ENCODE measurements at regions of chr1 and their contacts with region 1.

Region 1: GRCh38 chr1:108828022-108828961 is 28.6 kb downstream of the AKNAD1 start:
- DNase-seq: peak; percentile 90

Region 2: DNA sequence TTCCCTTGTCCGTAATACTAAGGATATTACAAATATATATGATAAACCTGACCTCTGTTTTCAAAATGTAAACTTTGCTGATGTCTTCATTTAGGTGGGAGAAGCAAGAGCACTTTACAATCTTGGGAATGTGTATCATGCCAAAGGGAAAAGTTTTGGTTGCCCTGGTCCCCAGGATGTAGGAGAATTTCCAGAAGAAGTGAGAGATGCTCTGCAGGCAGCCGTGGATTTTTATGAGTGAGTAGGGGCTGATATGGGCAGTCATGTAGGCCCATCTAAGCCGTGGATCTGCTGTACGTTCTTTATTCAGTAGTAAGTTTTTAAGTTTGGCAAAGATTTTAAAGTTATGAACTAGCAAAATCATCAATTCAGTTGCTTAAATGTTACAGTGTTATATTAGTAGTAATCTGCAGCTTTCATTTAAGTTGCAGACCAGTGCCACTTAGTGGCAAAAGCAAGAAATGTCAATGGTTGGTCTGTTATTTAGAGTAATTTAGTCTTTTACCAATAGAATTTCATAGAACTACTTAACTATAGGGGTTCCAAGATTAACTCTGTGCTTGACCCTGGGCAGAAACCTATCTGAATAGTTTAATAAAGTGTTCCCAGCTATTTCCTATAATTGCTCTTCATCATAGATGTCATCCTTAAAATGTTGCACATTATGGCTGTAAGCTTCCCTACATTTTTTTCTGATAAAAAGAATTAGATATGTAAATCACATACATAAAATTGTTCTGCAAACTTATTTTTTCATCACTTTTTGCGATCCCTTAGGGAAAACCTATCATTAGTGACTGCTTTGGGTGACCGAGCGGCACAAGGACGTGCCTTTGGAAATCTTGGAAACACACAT is 69.8 kb after region 1 on chr1:
- CTCF ChIA-PET with region 1: interaction called, 65 read pairs
- POLR2A ChIA-PET with region 1: no interaction called
- DNase-seq: peak; percentile 58

Measured in HEK293T (cell line).